Dorsolateral prefrontal cortex (tissue), 120 donors: ENCODE measurements at regions of chr5 and their contacts with region 1.

Region 1: DNA sequence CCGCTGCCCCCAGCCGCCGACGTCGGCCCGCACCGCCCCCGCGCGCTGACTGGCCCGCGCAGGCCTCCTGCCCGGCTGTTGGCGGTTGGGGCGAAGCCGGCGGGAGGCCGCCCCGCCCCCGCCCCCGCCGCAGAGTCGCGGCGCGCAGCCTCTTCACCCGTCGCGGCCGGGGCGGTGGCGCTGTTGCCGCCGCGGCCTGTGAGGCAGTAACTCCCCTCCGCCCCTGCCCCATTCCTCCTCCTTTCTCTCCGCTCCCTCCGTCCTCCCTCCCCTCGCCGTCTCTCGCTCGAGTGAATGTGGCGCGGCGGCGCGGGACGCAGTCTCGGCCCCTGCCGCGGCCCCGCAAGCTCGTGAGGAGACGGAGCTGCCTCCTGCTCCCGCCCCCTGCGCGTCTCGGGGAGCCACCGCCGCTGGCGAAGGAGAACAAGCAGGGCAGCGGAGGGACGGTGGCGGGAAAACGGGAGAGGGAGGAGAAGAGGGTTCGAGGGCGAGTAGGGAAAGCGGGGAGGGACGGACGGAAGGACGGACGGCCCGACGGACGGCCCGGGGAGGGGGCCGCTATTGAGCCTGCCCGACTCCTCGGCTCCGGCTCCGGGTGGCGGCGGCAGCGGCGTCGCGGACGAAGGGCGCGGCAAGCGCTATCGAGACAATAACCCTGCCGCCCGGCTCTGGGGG is 637 bp upstream of the ERBIN start:
- DNase-seq: peak; percentile 42 to 92 (median 86)
- H3K4me3 ChIP-seq: peak overlapping the region; percentile 56 to 98 (median 89)
- H3K27ac ChIP-seq: peak overlapping the region; percentile 92 to 100 (median 99)
- H3K27me3 ChIP-seq: no peaks in the 10 kb centered on the region
- CTCF ChIP-seq: peak in 42 of 56 donors; percentile 13 to 64 (median 41)

Region 2: DNA sequence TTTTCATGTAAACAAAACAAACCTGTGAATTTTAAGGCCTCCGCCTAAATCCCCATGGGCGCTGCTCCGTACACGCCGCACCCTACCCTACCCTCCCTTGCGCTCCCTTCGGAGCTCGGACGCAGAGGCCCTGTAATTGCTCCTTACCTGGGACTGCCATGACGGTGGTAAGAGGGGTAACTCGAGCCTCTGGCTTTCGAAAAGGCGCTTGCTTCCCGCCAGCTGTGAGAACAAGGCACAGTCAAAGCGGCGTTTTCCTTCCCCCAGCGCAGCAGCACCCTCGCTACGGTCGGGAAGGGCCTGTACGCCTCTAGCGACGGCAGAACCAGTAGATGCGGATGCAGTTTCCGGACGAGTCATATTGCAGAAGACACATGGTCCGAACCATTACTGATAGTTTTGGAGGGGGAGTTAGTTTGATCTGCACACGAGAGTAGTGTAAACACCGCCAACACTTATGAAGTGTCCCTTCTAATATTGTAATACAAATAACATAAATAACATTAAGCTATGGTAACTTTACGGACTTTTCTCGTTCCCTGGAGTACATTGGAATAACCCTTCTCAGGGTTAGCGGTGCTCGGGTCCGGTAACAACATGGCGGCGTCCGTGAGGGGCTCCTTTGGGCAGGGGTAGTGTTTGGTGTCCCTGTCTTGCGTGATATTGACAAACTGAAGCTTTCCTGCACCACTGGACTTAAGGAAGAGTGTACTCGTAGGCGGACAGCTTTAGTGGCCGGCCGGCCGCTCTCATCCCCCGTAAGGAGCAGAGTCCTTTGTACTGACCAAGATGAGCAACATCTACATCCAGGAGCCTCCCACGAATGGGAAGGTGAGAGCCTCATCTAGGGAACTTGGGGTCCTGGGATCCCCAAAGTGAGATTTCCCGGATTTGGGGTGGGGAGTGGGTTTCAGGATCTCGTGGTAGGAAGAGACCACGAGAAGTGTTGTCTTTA is 1157.1 kb before region 1 on chr5 and contains the starts of genes CWC27 and SREK1IP1:
- intact Hi-C with region 1: loop called in 1 of 2 experiments (anchors 10 kb)
- DNase-seq: peak; percentile 55 to 84 (median 79)
- H3K4me3 ChIP-seq: peak within 1 kb of the TSS; percentile 67 to 99 (median 89)
- H3K27ac ChIP-seq: peak within 1 kb of the TSS; percentile 53 to 96 (median 89)
- H3K27me3 ChIP-seq: no peaks in the 10 kb centered on the region
- CTCF ChIP-seq: peak in 39 of 56 donors; percentile 8 to 61 (median 29)
- total RNA-seq, gene CWC27: 20.1 to 36.7 (median 27.0) TPM
- total RNA-seq, gene SREK1IP1: 8.4 to 22.4 (median 14.4) TPM

Region 3: GRCh38 chr5:65760504-65761275 is 165.0 kb before region 1 on chr5:
- intact Hi-C with region 1: loop called (anchors 5 to 10 kb)
- DNase-seq: peak in 9 of 10 donors; percentile 26 to 82 (median 59)
- H3K4me3 ChIP-seq: peak overlapping the region in 2 of 59 donors; percentile 2 to 8
- H3K27ac ChIP-seq: peak overlapping the region in 29 of 59 donors; percentile 1 to 67 (median 32)
- H3K27me3 ChIP-seq: no peaks in the 10 kb centered on the region
- CTCF ChIP-seq: peak in 53 of 56 donors; percentile 23 to 78 (median 54)

Region 4: DNA sequence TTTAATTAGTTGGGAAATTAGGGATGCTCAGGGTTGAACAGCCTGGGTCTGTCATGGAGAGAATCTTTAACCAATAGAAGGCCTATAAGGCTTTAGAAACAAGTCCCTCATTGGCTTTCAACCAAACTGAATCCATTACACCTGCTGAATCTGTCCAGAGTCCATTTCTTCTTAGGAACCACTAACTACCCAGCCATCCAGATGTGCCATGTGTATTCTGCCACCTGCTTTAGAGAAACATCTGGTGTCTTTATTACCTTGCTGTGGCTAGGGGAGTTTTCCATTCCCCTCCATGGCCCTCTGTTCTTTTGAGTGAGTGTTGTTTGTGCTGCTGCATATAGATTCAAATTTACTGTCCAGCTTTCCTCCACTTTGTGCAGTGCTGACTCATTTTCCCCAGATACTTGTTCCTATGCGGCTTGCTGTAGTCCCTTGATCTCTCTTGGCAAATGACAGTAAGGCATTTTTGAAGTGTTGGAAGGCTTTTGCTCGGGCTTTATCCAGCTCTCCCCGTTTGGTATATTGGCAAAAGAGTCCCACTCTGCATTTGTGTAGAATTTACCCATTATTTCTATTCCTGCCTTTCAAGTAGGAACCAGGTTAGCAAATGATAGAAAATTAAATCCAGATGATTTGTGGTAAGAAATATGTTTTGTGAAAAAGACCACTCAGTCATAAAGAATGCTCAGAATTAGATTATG is 149.1 kb before region 1 on chr5:
- intact Hi-C with region 1: no loop called
- DNase-seq: no peak
- H3K4me3 ChIP-seq: no peak overlapping the region
- H3K27ac ChIP-seq: peak overlapping the region in 31 of 59 donors; percentile 1 to 64 (median 36)
- H3K27me3 ChIP-seq: no peaks in the 10 kb centered on the region
- CTCF ChIP-seq: no peak

Region 5: DNA sequence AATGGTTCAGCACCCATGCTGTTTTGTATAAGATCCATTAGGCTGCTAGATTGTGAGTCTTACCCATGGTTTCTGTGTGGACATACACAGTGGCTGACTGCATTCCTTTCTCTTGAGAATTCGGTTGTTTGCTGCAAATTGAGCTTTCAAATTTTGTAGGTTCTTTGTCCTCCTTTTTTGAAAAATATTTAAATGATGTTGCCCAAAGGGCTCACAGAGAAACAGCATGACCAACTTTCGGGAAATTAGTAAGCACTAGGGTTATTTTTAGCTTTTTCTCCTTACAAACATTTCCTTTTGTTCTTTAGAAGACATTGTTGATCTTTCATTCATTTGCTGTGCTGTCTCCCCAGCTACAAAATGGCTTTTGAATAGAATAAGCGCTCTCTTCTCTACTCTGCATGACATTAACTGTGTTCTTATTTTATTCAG is 124.4 kb before region 1 on chr5:
- intact Hi-C with region 1: loop called (anchors 5 to 10 kb)
- DNase-seq: no peak
- H3K4me3 ChIP-seq: peak overlapping the region in 21 of 59 donors; percentile 0 to 51 (median 22)
- H3K27ac ChIP-seq: peak overlapping the region; percentile 80 to 99 (median 94)
- H3K27me3 ChIP-seq: no peaks in the 10 kb centered on the region
- CTCF ChIP-seq: peak in 4 of 56 donors; percentile 9 to 18 (median 14)

Region 6: DNA sequence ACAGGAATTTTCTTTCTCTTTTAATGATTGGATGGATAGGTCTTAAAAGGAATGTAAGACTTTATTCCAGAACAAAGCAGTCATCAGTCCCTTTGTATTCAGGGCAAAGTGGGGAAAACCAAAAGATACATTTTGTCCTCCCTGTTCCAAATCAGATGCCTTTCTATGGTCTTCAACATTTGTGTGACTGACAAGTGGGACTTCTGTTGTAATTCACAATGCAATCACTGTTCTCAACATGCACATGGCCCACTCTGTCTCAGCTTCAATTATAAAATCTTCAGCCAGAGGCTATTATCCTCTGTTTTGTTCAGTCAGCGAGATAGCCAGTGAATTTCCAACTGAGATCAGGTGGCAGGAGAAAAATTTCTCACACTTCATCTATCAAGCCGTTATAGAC is 94.9 kb before region 1 on chr5:
- intact Hi-C with region 1: loop called (anchors 1 to 2 kb)
- DNase-seq: peak in 2 of 10 donors; percentile 41 to 46
- H3K4me3 ChIP-seq: peak overlapping the region in 20 of 59 donors; percentile 0 to 42 (median 11)
- H3K27ac ChIP-seq: peak overlapping the region; percentile 72 to 99 (median 95)
- H3K27me3 ChIP-seq: no peaks in the 10 kb centered on the region
- CTCF ChIP-seq: peak in 6 of 56 donors; percentile 5 to 28 (median 14)